Prostate gland (tissue), 2 donors: ENCODE measurements at regions of chr3 and their contacts with region 1.

Region 1: GRCh38 chr3:113495035-113495434 is 19.9 kb downstream of the SPICE1 start:
- DNase-seq: peak; percentile 35
- H3K4me3 ChIP-seq: no peak overlapping the region
- H3K27ac ChIP-seq: no peak overlapping the region
- H3K4me1 ChIP-seq: no peaks in the 10 kb centered on the region
- H3K27me3 ChIP-seq: no peaks in the 10 kb centered on the region
- CTCF ChIP-seq: peak in 3 of 4 experiments; percentile 48 to 65 (median 65)
- POLR2A ChIP-seq: no peak

Region 2: GRCh38 chr3:113575206-113575605 is 80.2 kb after region 1 on chr3:
- intact Hi-C with region 1: loop called (anchors 10 kb)
- DNase-seq: no peak
- H3K4me3 ChIP-seq: no peak overlapping the region
- H3K27ac ChIP-seq: no peak overlapping the region
- H3K4me1 ChIP-seq: no peaks in the 10 kb centered on the region
- H3K27me3 ChIP-seq: no peaks in the 10 kb centered on the region
- CTCF ChIP-seq: no peak
- POLR2A ChIP-seq: no peak